ENCODE measurements at regions of chr10 and their contacts with region 1.

Region 1: DNA sequence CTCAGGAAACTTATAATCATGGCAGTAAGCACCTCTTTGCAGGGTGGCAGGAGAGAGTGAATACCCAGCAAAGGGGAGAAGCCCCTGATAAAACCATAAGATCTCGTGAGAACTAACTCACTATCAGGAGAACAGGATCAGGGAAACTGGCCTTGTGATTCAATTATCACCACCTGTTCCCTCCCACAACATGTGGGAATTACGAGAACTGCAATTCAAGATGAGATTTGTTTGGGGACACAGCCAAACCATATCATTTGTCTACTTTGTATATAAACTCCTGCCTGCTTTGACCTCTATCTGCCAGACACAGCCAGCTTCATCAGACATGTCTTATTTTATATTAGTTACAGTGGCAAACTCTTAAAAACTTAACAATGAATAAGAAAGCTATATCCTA is 50.4 kb downstream of the ARMC3 start:
- DNase-seq: no peak
- H3K4me3 ChIP-seq: no peak overlapping the region
- H3K27ac ChIP-seq: no peak overlapping the region
- H3K4me1 ChIP-seq: no peaks in the 10 kb centered on the region
- H3K27me3 ChIP-seq: peaks cover 5% of the 10 kb centered on the region
- CTCF ChIP-seq: no peak
- EP300 ChIP-seq: no peak
- POLR2A ChIP-seq: no peak

Region 2: DNA sequence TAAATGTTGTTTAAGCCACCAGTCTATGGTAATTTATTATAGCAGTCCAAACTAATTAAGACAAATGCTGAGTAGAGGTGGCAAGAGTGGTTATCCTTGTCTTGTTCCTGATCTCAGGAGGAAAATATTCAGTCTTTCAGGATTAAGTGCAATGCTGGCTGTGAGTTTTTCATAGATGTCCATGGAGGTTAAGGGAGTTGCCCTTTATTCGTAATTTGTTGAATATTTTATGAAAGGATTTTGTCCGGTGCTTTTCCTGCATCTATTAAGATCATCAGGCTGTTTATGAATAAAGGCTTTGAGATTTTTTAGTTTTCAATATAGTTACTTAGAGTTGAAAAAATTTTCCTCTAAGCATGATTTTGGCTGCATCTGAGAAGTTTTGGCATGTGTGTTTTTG is 450.8 kb before region 1 on chr10:
- in situ Hi-C with region 1: no loop called
- intact Hi-C with region 1: no loop called
- DNase-seq: no peak
- H3K4me3 ChIP-seq: no peak overlapping the region
- H3K27ac ChIP-seq: no peak overlapping the region
- H3K4me1 ChIP-seq: no peaks in the 10 kb centered on the region
- H3K27me3 ChIP-seq: no peaks in the 10 kb centered on the region
- CTCF ChIP-seq: no peak
- EP300 ChIP-seq: no peak
- POLR2A ChIP-seq: no peak

Region 3: DNA sequence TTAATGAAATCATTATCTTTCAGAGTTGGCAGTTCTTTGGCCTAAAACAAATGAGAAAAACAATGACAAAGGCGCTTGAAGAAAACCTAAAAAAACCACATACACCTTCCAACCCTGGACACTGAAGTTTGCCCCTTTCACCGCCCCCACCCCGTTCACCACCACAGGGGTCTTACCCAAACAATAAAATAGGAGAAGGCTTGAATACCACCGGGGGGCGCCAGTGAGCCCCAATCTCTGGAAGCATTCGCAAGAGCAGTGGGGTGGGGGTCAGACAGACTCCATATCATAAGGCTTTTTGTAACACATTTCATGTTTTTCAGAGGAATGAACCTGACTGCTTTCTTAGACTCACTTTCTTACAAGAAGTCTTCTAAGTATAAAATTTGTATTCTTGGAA is 427.6 kb before region 1 on chr10:
- in situ Hi-C with region 1: loop called in 3 of 4 experiments (anchors 10 to 25 kb)
- intact Hi-C with region 1: no loop called
- DNase-seq: peak; percentile 44
- H3K4me3 ChIP-seq: no peak overlapping the region
- H3K27ac ChIP-seq: no peak overlapping the region
- H3K4me1 ChIP-seq: no peaks in the 10 kb centered on the region
- H3K27me3 ChIP-seq: no peaks in the 10 kb centered on the region
- CTCF ChIP-seq: peak; percentile 39 to 55 (median 52)
- EP300 ChIP-seq: no peak
- POLR2A ChIP-seq: no peak

Region 4: GRCh38 chr10:22693371-22693784 is 284.9 kb before region 1 on chr10:
- in situ Hi-C with region 1: no loop called
- intact Hi-C with region 1: no loop called
- DNase-seq: no peak
- H3K4me3 ChIP-seq: no peak overlapping the region
- H3K27ac ChIP-seq: no peak overlapping the region
- H3K4me1 ChIP-seq: peaks cover 0 to 21% (median 0%) of the 10 kb centered on the region in 4 donors
- H3K27me3 ChIP-seq: no peaks in the 10 kb centered on the region
- CTCF ChIP-seq: no peak
- EP300 ChIP-seq: no peak
- POLR2A ChIP-seq: no peak